Naive thymus-derived CD8-positive, alpha-beta T cell (primary cell): ENCODE measurements at regions of chr17 and their contacts with region 1.

Region 1: GRCh38 chr17:67421869-67422273 is 44.8 kb downstream of the PITPNC1 start:
- DNase-seq: peak in 9 of 10 donors; percentile 52 to 85 (median 71)
- ATAC-seq: peak; percentile 91 to 98
- H3K4me3 Mint-ChIP-seq: peak overlapping the region; percentile 43 to 76 (median 64)
- H3K27ac Mint-ChIP-seq: peak overlapping the region; percentile 94 to 99 (median 98)
- H3K4me1 Mint-ChIP-seq: peaks cover 34 to 95% (median 89%) of the 10 kb centered on the region in 4 donors
- H3K27me3 Mint-ChIP-seq: no peaks in the 10 kb centered on the region

Region 2: DNA sequence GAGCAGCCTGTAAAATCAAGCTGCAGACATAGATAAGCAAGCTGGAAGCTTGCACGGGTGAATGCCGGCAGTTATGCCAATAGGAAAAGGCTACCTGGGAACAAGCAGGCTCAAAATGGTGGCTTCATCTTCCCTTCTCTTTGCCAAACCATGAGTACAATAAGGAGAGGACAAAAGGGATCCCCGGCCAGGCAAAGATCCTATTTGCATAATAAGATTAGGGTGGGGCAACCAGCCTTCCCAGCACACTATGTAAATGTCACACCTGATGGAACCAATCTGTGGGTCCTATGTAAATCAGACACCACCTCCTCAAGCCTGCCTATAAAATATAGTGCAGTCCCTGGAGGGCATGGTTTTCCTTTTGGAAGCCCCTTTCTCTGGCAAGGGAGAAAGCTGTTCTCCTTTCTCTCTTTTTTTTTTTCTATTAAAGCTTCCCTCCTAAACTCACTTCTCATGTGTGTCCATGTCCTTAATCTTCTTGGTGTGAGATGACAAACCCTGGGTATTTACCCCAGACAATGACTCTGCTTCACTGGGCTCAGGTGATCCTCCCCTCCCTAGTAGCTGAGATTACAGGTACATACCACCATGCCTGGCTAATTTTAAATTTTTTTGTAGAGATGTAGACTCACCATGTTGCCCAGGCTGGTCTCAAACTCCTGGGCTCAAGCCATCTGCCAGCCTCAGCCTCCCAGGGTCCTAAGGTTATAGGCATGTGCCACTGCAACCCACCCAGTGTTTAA is 99.7 kb before region 1 on chr17:
- POLR2A ChIA-PET with region 1: no interaction called
- DNase-seq: no peak
- ATAC-seq: no peak
- H3K4me3 Mint-ChIP-seq: no peak overlapping the region
- H3K27ac Mint-ChIP-seq: no peak overlapping the region
- H3K4me1 Mint-ChIP-seq: peaks cover 0 to 2% (median 0%) of the 10 kb centered on the region in 4 donors
- H3K27me3 Mint-ChIP-seq: peaks cover 0 to 2% (median 0%) of the 10 kb centered on the region in 5 donors

Region 3: DNA sequence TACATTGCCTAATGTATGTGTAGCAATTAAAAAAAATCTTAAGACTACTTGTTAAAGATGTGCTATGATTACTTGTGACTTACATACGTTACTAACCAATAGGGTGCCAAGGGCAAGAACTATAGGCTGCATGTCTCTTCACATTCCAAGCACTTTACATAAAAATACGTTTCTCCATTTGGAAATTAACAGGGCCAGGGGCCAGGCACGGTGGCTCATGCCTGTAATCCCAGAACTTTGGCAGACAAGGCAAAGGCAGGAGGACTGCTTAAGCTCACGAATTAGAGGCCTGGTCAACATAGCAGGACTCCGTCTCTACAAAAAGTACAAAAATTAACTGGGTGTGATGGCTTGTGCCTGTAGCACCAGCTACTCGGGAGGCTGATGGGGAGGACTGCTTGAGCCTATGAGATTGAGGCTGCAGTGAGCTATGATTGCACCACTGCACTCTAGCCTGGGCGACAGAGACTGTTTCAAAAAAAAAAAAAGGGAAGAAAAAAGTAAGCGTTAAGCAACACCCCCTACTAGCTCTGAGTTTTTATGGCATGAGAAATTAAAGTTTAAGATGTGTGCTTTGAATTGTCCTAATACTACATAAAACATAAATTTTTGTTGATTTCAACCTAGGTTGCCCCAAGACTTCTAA is 67.8 kb before region 1 on chr17:
- POLR2A ChIA-PET with region 1: no interaction called
- DNase-seq: no peak
- ATAC-seq: no peak
- H3K4me3 Mint-ChIP-seq: no peak overlapping the region
- H3K27ac Mint-ChIP-seq: peak overlapping the region in 2 of 10 donors; percentile 48 to 51
- H3K4me1 Mint-ChIP-seq: peaks cover 8 to 26% (median 17%) of the 10 kb centered on the region in 4 donors
- H3K27me3 Mint-ChIP-seq: no peaks in the 10 kb centered on the region

Region 4: GRCh38 chr17:67411397-67411796 is 10.5 kb before region 1 on chr17:
- POLR2A ChIA-PET with region 1: interaction called, 14 read pairs
- DNase-seq: no peak
- ATAC-seq: no peak
- H3K4me3 Mint-ChIP-seq: peak overlapping the region in 6 of 10 donors; percentile 0 to 52 (median 32)
- H3K27ac Mint-ChIP-seq: peak overlapping the region; percentile 72 to 91 (median 86)
- H3K4me1 Mint-ChIP-seq: peaks cover 27 to 83% (median 75%) of the 10 kb centered on the region in 4 donors
- H3K27me3 Mint-ChIP-seq: no peaks in the 10 kb centered on the region

Region 5: GRCh38 chr17:67469208-67469895 is 47.5 kb after region 1 on chr17:
- POLR2A ChIA-PET with region 1: interaction called, 12 read pairs
- DNase-seq: peak in 8 of 10 donors; percentile 26 to 77 (median 43)
- ATAC-seq: peak; percentile 82 to 85
- H3K4me3 Mint-ChIP-seq: peak overlapping the region; percentile 72 to 92 (median 84)
- H3K27ac Mint-ChIP-seq: peak overlapping the region; percentile 87 to 100 (median 96)
- H3K4me1 Mint-ChIP-seq: peaks cover 38 to 80% (median 73%) of the 10 kb centered on the region in 4 donors
- H3K27me3 Mint-ChIP-seq: no peaks in the 10 kb centered on the region

Region 6: GRCh38 chr17:67475236-67475937 is 53.5 kb after region 1 on chr17:
- POLR2A ChIA-PET with region 1: interaction called, 12 read pairs
- DNase-seq: peak; percentile 68 to 91 (median 85)
- ATAC-seq: peak; percentile 70 to 75
- H3K4me3 Mint-ChIP-seq: peak overlapping the region; percentile 66 to 84 (median 76)
- H3K27ac Mint-ChIP-seq: peak overlapping the region; percentile 90 to 98 (median 96)
- H3K4me1 Mint-ChIP-seq: peaks cover 49 to 79% (median 71%) of the 10 kb centered on the region in 4 donors
- H3K27me3 Mint-ChIP-seq: no peaks in the 10 kb centered on the region